T-cell (primary cell): ENCODE measurements at regions of chr6 and their contacts with region 1.

Region 1: DNA sequence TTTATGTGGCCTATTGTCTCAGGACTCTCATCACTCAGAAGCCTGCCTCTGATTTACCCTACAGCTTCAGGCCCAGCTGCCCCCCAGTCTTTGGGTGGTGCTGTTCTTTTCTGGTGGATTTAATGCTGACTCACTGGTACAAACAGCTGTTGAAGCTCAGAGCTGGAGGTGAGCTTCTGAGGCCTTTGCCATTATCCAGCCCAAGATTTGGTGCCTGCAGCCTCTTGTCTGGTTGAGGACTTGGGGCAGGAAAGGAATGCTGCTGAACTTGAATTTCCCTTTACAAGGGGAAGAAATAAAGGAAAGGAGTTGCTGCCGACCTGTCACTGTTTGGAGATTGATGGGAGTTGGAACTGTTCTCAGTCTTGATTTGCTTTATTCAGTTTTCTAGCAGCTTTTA is 19.8 kb downstream of the ABCF1 start:
- DNase-seq: no peak
- ATAC-seq: peak in 1 of 4 experiments; percentile 24
- H3K4me3 ChIP-seq: no peak overlapping the region
- H3K4me3 Mint-ChIP-seq: no peak overlapping the region
- H3K27ac ChIP-seq: no peak overlapping the region
- H3K27ac Mint-ChIP-seq: peak overlapping the region in 1 of 2 donors; percentile 34
- H3K4me1 ChIP-seq: no peaks in the 10 kb centered on the region
- H3K4me1 Mint-ChIP-seq: peaks cover 3 to 8% (median 8%) of the 10 kb centered on the region in 3 donors
- H3K27me3 ChIP-seq: no peaks in the 10 kb centered on the region
- H3K27me3 Mint-ChIP-seq: no peaks in the 10 kb centered on the region

Region 2: GRCh38 chr6:30259140-30260035 is 331.6 kb before region 1 on chr6:
- CTCF ChIA-PET with region 1: no interaction called
- POLR2A ChIA-PET with region 1: no interaction called
- DNase-seq: peak; percentile 8 to 87 (median 48)
- ATAC-seq: peak; percentile 82 to 93 (median 86)
- H3K4me3 ChIP-seq: peak overlapping the region; percentile 80 to 88
- H3K4me3 Mint-ChIP-seq: peak overlapping the region; percentile 79 to 94 (median 93)
- H3K27ac ChIP-seq: peak overlapping the region; percentile 65
- H3K27ac Mint-ChIP-seq: peak overlapping the region; percentile 60 to 87
- H3K4me1 ChIP-seq: peaks cover 3 to 19% of the 10 kb centered on the region in 2 experiments
- H3K4me1 Mint-ChIP-seq: peaks cover 8 to 24% (median 16%) of the 10 kb centered on the region in 3 donors
- H3K27me3 ChIP-seq: no peaks in the 10 kb centered on the region
- H3K27me3 Mint-ChIP-seq: no peaks in the 10 kb centered on the region

Region 3: GRCh38 chr6:30463651-30464618 is 127.1 kb before region 1 on chr6:
- CTCF ChIA-PET with region 1: no interaction called
- POLR2A ChIA-PET with region 1: no interaction called
- DNase-seq: peak in 33 of 35 experiments; percentile 16 to 79 (median 48)
- ATAC-seq: peak; percentile 40 to 70 (median 61)
- H3K4me3 ChIP-seq: peak overlapping the region; percentile 0 to 35
- H3K4me3 Mint-ChIP-seq: peak overlapping the region in 1 of 3 donors; percentile 81
- H3K27ac ChIP-seq: no peak overlapping the region
- H3K27ac Mint-ChIP-seq: no peak overlapping the region
- H3K4me1 ChIP-seq: peaks cover 21 to 53% of the 10 kb centered on the region in 2 experiments
- H3K4me1 Mint-ChIP-seq: peaks cover 40 to 54% (median 52%) of the 10 kb centered on the region in 3 donors
- H3K27me3 ChIP-seq: peaks cover 23 to 78% of the 10 kb centered on the region in 2 experiments
- H3K27me3 Mint-ChIP-seq: peaks cover 76 to 82% of the 10 kb centered on the region in 2 donors

Region 4: DNA sequence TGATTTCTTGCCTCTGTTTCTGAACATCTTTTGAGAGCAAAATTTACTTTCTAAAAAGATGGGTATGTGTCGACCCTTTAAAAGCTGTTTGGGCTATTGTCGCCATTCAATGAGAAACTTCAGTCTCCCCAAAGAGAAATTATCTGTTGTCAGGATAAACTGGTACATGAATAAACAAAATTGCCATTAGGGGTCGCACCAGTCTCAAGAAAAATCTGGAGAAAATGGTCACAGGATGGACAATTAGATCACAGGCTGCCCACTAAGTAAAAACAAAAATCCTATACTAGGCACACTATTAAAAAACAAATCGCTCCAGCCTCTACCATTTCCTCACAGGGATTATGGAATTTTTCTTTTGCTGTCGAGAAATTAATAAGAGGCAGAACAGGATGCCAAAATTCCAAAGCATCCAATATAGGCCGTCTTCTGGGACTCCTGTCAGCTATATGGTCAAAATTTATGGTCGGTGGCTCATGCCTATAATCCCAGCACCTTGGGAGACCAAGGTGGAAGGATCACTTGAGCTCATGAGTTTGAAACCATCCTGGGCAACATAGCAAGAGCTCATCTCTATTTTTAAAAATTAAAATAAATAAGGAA is 107.2 kb before region 1 on chr6:
- CTCF ChIA-PET with region 1: interaction called, 10 to 26 read pairs
- POLR2A ChIA-PET with region 1: interaction called in 1 of 2 experiments, 3 read pairs
- DNase-seq: peak in 2 of 35 experiments; percentile 48 to 77
- ATAC-seq: no peak
- H3K4me3 ChIP-seq: no peak overlapping the region
- H3K4me3 Mint-ChIP-seq: no peak overlapping the region
- H3K27ac ChIP-seq: no peak overlapping the region
- H3K27ac Mint-ChIP-seq: no peak overlapping the region
- H3K4me1 ChIP-seq: peaks cover 12 to 35% of the 10 kb centered on the region in 2 experiments
- H3K4me1 Mint-ChIP-seq: peaks cover 31 to 43% (median 40%) of the 10 kb centered on the region in 3 donors
- H3K27me3 ChIP-seq: peaks cover 0 to 21% of the 10 kb centered on the region in 2 experiments
- H3K27me3 Mint-ChIP-seq: peaks cover 17 to 31% of the 10 kb centered on the region in 2 donors

Region 5: GRCh38 chr6:30578051-30578450 is 12.9 kb before region 1 on chr6:
- CTCF ChIA-PET with region 1: interaction called in 1 of 2 experiments, 4 read pairs
- POLR2A ChIA-PET with region 1: interaction called in 1 of 2 experiments, 17 read pairs
- DNase-seq: no peak
- ATAC-seq: no peak
- H3K4me3 ChIP-seq: no peak overlapping the region
- H3K4me3 Mint-ChIP-seq: no peak overlapping the region
- H3K27ac ChIP-seq: no peak overlapping the region
- H3K27ac Mint-ChIP-seq: no peak overlapping the region
- H3K4me1 ChIP-seq: peaks cover 11 to 12% of the 10 kb centered on the region in 2 experiments
- H3K4me1 Mint-ChIP-seq: peaks cover 28 to 40% (median 31%) of the 10 kb centered on the region in 3 donors
- H3K27me3 ChIP-seq: no peaks in the 10 kb centered on the region
- H3K27me3 Mint-ChIP-seq: no peaks in the 10 kb centered on the region

Region 6: DNA sequence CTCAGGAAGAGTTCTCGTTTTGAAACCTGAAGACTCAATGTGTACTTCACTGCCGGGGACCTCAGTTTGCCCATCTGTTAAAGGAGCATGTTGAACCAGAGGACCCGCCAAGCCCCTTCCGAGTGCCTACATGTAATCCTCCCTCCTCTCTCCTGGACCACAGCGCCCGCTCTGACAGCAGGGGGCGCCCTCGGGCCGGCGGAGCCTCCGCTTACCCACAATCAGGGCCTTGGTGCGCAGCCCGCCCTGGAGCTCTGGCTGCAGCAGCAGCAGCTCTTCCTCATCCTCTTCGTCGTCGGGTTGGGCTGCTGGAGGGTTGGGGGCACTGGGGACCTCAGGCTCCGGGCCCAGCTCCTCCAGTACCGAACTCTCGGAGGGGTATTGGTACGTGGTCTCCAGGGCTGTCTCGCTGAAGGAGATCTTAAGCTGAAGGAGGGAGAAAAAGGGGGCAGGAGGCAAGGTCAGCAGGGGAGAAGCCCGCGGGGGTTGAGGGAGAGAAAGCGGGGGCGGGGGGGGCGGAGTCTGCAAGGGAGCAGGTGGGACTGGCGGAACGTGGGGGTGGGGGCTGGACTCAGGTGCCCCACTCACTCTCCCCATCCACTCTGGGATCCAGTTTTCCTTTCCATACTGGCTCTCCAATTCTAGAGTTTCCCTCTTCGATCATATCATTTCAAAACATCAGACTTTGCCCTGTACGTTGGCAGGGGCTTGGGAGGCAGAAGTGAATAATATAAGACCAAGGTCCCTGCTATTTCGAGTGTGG is 88.2 kb after region 1 on chr6:
- CTCF ChIA-PET with region 1: interaction called in 1 of 2 experiments, 11 read pairs
- POLR2A ChIA-PET with region 1: no interaction called
- DNase-seq: peak; percentile 77 to 95 (median 90)
- ATAC-seq: peak; percentile 27 to 53 (median 32)
- H3K4me3 ChIP-seq: peak overlapping the region; percentile 92 to 100
- H3K4me3 Mint-ChIP-seq: peak overlapping the region; percentile 92 to 97 (median 96)
- H3K27ac ChIP-seq: peak overlapping the region; percentile 81
- H3K27ac Mint-ChIP-seq: peak overlapping the region; percentile 94 to 96
- H3K4me1 ChIP-seq: peaks cover 15 to 45% of the 10 kb centered on the region in 2 experiments
- H3K4me1 Mint-ChIP-seq: peaks cover 42 to 55% (median 43%) of the 10 kb centered on the region in 3 donors
- H3K27me3 ChIP-seq: no peaks in the 10 kb centered on the region
- H3K27me3 Mint-ChIP-seq: no peaks in the 10 kb centered on the region

Region 7: DNA sequence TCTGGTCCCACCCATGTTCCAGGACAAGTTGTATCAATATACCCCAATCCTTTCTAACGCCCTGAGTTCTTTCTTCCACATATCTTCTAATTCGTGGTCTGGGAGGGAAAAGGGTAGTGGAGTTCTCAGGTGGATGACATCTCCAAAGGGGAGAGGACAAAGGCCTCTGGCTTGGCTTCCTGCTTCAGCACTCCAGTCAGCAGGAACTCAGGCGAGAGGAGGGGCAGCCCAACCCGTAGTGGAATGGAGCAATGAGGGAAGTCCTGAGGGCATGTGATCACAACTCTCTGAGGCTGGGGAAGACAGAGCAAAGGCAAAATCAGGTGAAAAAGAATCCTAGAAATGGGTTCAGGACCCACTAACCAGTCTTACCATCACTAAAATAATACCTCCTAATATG is 109.3 kb after region 1 on chr6:
- CTCF ChIA-PET with region 1: no interaction called
- POLR2A ChIA-PET with region 1: interaction called in 1 of 2 experiments, 14 read pairs
- DNase-seq: no peak
- ATAC-seq: no peak
- H3K4me3 ChIP-seq: no peak overlapping the region
- H3K4me3 Mint-ChIP-seq: no peak overlapping the region
- H3K27ac ChIP-seq: no peak overlapping the region
- H3K27ac Mint-ChIP-seq: no peak overlapping the region
- H3K4me1 ChIP-seq: no peaks in the 10 kb centered on the region
- H3K4me1 Mint-ChIP-seq: no peaks in the 10 kb centered on the region
- H3K27me3 ChIP-seq: no peaks in the 10 kb centered on the region
- H3K27me3 Mint-ChIP-seq: no peaks in the 10 kb centered on the region